Activated CD4-positive, alpha-beta T cell treated with anti-CD3 and anti-CD28 coated beads for 36 hours (primary cell): ENCODE measurements at regions of chr10 and their contacts with region 1.

Region 1: DNA sequence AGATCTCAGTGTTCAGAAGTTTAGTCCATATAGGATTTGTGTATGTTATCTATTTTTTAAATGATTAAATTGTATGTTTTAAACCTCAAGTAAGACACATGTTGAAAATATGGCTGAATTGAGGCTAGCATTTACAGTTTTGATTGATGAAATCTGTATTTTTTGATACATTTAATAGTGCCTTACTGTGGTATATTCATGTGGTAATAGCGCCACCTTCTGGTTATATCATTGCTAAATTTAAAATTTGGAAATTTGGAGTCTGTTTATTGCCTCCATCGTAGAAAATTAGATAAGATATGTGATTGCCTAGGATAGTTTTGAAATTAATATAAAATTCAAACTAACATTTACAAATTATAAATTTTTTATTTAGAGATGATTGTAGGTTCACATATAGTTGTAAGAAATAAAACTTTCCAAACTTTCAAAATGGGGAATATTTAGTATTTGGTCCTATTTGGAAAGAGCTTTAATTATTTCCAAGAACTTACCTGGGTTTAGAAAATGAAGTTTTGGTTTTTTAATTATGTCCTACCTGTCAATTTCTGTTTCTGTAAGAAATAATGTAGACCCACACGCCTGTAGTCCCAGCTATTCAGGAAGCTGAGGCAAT is 19.1 kb upstream of the ARMS2 start:
- DNase-seq: no peak
- ATAC-seq: peak; percentile 39
- H3K4me3 Mint-ChIP-seq: no peak overlapping the region
- H3K27ac Mint-ChIP-seq: no peak overlapping the region
- H3K4me1 Mint-ChIP-seq: no peaks in the 10 kb centered on the region
- H3K27me3 Mint-ChIP-seq: no peaks in the 10 kb centered on the region

Region 2: DNA sequence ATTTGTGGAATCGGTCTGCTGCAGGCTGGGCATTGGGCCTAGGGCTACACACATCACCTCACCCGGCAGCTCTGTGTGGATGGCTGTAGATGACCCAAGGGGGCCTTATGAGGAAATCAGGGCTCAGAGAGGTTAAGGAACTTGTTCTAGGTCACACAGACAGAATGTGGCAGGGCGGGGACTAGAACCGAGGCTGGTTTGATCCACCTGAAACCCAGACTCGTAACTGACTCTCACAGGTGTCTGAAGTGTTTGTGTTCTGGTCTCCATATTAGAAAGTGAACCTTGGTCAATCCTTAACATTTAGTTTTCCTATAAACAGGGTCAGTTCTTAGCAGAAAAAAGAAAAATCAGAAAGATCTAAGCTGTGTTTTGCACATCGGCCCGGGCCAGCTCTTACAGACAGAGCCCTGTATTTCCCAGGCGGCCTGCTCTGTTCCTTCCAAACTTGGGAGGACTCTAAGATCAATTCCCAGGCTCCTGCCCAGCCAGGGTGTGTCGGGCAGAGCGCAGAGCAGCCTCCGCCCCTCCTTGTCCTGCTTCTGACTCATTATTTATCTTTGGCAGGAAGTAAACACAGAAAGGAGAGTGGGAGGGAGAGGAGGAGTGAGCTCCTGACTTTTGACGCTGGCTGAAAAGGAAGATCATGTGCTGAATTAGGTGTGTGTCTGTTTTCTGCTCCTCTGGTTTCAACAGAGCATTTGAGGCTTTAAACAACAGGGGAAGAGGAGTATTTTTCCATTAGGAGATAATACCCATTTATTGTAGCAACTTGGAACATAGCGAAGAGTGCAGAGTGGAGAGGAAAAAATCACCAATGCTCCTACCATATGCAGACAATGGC is 372.3 kb before region 1 on chr10:
- CTCF ChIA-PET with region 1: no interaction called
- POLR2A ChIA-PET with region 1: no interaction called
- intact Hi-C with region 1: no loop called
- DNase-seq: no peak
- ATAC-seq: no peak
- H3K4me3 Mint-ChIP-seq: no peak overlapping the region
- H3K27ac Mint-ChIP-seq: no peak overlapping the region
- H3K4me1 Mint-ChIP-seq: no peaks in the 10 kb centered on the region
- H3K27me3 Mint-ChIP-seq: peaks cover 4% of the 10 kb centered on the region

Region 3: DNA sequence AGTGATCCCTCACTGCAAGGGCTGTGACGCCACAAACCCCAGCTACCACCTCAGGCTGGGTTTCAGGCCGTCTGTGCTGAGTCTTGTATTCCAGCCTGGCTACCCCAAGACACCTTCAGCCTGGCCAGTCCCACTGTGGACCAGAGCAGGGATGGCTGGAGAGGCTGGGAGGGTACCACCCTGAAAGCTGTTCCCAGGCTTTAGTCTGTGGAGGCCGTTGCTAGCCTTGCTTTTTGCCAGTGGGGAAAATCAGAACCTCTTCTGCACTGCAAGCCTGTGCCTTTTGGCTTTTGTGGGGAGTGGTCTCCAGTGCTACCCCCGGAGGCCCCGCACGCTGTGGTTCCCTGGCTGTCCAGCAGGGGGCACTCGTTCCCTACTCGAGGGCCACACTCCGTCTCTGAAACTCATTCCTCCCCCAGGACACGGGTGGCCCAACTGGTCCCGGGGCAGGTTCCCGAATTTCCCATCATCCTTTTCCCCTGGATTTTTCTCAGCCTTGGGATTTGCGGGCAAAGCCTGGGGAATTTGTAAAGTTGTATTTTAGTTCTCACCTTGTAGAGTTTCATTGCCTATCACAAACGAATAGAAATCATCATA is 292.6 kb before region 1 on chr10:
- CTCF ChIA-PET with region 1: interaction called, 5 read pairs
- POLR2A ChIA-PET with region 1: no interaction called
- intact Hi-C with region 1: loop called in 1 of 2 experiments (anchors 10 kb)
- DNase-seq: peak; percentile 61
- ATAC-seq: no peak
- H3K4me3 Mint-ChIP-seq: no peak overlapping the region
- H3K27ac Mint-ChIP-seq: no peak overlapping the region
- H3K4me1 Mint-ChIP-seq: no peaks in the 10 kb centered on the region
- H3K27me3 Mint-ChIP-seq: no peaks in the 10 kb centered on the region

Region 4: GRCh38 chr10:122267849-122268737 is 167.2 kb before region 1 on chr10:
- CTCF ChIA-PET with region 1: interaction called, 18 read pairs
- POLR2A ChIA-PET with region 1: no interaction called
- intact Hi-C with region 1: loop called in 1 of 2 experiments (anchors 1 kb)
- DNase-seq: peak; percentile 74
- ATAC-seq: peak; percentile 91
- H3K4me3 Mint-ChIP-seq: no peak overlapping the region
- H3K27ac Mint-ChIP-seq: no peak overlapping the region
- H3K4me1 Mint-ChIP-seq: no peaks in the 10 kb centered on the region
- H3K27me3 Mint-ChIP-seq: peaks cover 15% of the 10 kb centered on the region

Region 5: GRCh38 chr10:122279725-122280141 is 155.6 kb before region 1 on chr10:
- CTCF ChIA-PET with region 1: interaction called, 15 read pairs
- POLR2A ChIA-PET with region 1: no interaction called
- intact Hi-C with region 1: no loop called
- DNase-seq: peak; percentile 48
- ATAC-seq: no peak
- H3K4me3 Mint-ChIP-seq: no peak overlapping the region
- H3K27ac Mint-ChIP-seq: no peak overlapping the region
- H3K4me1 Mint-ChIP-seq: no peaks in the 10 kb centered on the region
- H3K27me3 Mint-ChIP-seq: peaks cover 13% of the 10 kb centered on the region

Region 6: GRCh38 chr10:122298598-122299301 is 136.6 kb before region 1 on chr10:
- CTCF ChIA-PET with region 1: interaction called, 87 read pairs
- POLR2A ChIA-PET with region 1: no interaction called
- intact Hi-C with region 1: loop called (anchors 1 kb)
- DNase-seq: peak; percentile 80
- ATAC-seq: peak; percentile 94
- H3K4me3 Mint-ChIP-seq: no peak overlapping the region
- H3K27ac Mint-ChIP-seq: no peak overlapping the region
- H3K4me1 Mint-ChIP-seq: peaks cover 5% of the 10 kb centered on the region
- H3K27me3 Mint-ChIP-seq: peaks cover 3% of the 10 kb centered on the region

Region 7: DNA sequence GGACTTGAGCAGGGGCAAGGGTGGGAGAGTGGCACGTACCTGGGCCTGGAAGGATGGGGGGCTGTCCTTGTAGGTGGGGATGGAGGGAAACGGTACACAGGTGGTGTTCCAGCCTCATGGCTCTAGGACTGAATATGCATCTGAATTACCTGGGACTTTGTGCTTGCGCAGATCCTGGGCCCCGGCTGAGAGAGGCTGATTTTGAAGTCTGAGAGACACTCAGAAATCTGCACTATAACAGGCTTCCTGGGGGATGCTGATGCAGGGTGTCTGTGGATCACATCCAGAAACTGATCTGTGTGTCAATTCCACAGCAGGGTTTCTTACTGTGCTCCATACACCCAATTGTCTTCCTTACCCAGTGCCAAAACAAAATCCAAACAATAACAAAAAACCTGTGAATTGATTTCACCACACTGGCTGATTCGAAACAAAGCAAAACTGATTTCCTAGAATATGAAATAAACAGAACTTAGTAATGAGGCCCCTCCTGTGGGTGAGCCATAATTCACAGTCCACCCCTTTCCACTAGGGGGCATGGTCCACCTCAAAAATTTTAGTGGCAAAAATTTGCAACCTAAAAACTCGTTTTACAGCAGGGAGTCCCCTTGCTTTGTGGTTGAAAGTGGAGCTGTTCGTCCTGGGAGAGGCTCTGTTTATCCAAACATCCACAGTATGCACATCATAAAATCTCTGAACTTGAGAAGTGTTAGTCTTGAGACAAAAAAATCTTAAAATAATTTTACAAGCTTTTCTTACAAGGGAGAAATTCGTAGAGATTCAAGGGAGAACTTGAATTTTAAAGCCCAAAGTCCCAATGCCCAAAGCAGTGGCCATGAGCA is 92.8 kb before region 1 on chr10:
- CTCF ChIA-PET with region 1: interaction called, 64 read pairs
- POLR2A ChIA-PET with region 1: no interaction called
- intact Hi-C with region 1: loop called (anchors 1 kb)
- DNase-seq: peak; percentile 73
- ATAC-seq: peak; percentile 82
- H3K4me3 Mint-ChIP-seq: no peak overlapping the region
- H3K27ac Mint-ChIP-seq: no peak overlapping the region
- H3K4me1 Mint-ChIP-seq: peaks cover 11% of the 10 kb centered on the region
- H3K27me3 Mint-ChIP-seq: peaks cover 4% of the 10 kb centered on the region

Region 8: DNA sequence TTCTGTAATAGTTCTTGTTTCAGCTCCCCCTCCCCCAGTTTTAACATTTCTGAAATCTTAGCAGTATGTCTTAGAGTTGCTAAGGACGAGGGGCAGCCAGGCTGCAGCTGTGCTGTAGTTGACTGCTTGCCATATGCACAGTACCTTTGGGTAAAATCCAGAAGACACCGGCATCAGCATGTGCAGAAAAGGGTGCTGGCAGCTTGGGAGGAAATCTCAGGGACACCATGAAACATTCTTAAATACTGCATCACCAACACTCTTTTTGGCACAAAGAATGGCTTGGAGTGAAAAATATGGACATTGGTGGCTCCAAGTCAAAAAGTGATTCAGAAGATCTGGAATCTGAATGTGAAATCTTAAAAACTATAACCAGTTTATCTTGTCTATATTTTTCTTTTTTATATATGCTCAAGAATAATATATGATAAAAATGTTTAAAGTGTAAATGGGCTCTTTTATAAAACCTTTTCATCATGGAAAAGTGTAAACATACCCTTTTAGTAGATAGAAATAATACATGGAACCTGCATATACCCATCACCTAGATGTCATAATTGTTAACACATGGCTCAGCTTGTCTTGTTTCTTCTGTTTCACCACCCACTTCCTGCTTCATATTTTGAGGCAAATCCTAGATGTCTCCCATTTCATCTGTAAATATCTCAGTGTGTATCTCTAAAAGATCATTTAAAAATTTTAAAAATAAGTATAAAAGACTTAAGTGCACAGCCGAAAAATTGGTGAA is 15.3 kb before region 1 on chr10:
- CTCF ChIA-PET with region 1: interaction called, 15 read pairs
- POLR2A ChIA-PET with region 1: no interaction called
- intact Hi-C with region 1: no loop called
- DNase-seq: no peak
- ATAC-seq: no peak
- H3K4me3 Mint-ChIP-seq: no peak overlapping the region
- H3K27ac Mint-ChIP-seq: no peak overlapping the region
- H3K4me1 Mint-ChIP-seq: peaks cover 70% of the 10 kb centered on the region
- H3K27me3 Mint-ChIP-seq: no peaks in the 10 kb centered on the region